ENCODE measurements at regions of chr16 and their contacts with region 1.

Region 1: DNA sequence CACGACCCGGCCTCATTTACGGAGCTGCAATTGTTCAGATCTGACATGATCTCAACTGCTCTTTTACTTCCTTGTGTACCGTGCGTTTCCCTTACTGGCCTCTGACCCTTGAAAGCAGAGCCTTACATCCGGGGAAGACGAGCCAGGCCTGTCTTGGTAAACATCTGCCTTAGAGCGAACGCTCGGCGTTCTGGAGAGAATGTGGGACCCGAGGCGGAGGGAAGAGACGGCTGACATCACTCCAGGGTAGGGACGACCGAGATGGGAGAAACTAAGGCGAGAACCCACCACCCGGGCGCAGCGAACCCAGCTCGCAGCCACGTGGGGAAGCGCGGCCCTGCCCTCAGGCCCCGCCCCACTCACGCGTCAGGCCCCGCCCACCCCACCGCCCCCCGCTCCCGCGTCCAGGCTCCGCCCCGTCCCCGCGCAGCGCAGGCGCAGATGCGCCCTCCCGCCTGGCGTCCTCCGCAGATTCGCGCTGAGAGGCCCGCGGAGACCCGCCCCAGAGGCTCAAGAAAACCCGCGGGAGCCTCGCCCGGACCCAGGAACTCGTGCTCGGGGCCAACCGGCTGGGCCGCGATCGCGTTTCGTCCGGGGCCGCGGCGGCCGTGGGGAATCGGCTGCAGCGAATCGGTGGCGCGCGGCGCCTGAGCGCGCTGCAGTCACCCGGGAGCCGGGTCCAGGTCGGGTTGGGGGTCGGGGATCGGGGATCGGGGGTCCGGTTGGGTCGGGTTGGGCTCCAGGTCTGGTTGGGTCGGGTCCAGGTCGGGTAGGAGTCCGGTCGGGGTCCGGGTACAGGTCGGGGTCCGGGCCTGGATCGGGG is at the start of gene TELO2:
- DNase-seq: peak; percentile 85 to 93 (median 88)
- H3K4me3 ChIP-seq: peak within 1 kb of the TSS; percentile 48 to 72
- H3K4me3 Mint-ChIP-seq: peak within 1 kb of the TSS; percentile 93 to 98 (median 95)
- H3K27ac ChIP-seq: peak within 1 kb of the TSS; percentile 78
- H3K27ac Mint-ChIP-seq: peak within 1 kb of the TSS; percentile 93 to 100 (median 99)
- H3K4me1 ChIP-seq: peaks cover 20% of the 10 kb centered on the region
- H3K4me1 Mint-ChIP-seq: peaks cover 7 to 22% (median 15%) of the 10 kb centered on the region in 4 donors
- H3K27me3 ChIP-seq: no peaks in the 10 kb centered on the region
- H3K27me3 Mint-ChIP-seq: peaks cover 0 to 1% of the 10 kb centered on the region in 2 donors
- total RNA-seq, gene TELO2: 55.3 to 56.0 TPM

Region 2: DNA sequence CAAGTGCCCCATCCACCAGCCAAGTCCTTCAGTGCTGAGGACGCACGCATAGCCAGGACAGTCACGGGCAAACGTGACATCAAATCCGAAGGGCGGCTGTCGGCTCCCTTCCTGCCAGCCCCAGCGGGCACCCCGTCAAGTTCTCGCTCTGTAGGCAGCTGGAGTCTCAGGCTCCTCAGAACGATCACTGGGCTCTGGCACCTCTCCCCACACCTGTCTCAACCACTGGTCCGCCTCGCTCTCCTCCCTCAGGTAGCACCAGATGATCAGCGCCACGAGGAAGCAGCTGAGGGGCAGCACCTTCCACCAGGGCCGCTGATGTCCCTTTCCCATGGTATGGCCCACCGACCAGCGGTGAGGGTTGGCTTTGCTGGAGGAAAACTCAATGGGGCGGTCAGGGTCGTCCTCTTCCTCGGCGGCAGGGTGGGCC is 73.0 kb before region 1 on chr16:
- CTCF ChIA-PET with region 1: no interaction called
- POLR2A ChIA-PET with region 1: interaction called, 22 read pairs
- intact Hi-C with region 1: loop called (anchors 1 kb)
- DNase-seq: no peak
- H3K4me3 ChIP-seq: peak overlapping the region; percentile 64 to 78
- H3K4me3 Mint-ChIP-seq: peak overlapping the region; percentile 79 to 97 (median 92)
- H3K27ac ChIP-seq: peak overlapping the region; percentile 85
- H3K27ac Mint-ChIP-seq: peak overlapping the region; percentile 64 to 100 (median 91)
- H3K4me1 ChIP-seq: peaks cover 12% of the 10 kb centered on the region
- H3K4me1 Mint-ChIP-seq: peaks cover 5 to 29% (median 15%) of the 10 kb centered on the region in 4 donors
- H3K27me3 ChIP-seq: no peaks in the 10 kb centered on the region
- H3K27me3 Mint-ChIP-seq: peaks cover 0 to 3% of the 10 kb centered on the region in 2 donors

Region 3: DNA sequence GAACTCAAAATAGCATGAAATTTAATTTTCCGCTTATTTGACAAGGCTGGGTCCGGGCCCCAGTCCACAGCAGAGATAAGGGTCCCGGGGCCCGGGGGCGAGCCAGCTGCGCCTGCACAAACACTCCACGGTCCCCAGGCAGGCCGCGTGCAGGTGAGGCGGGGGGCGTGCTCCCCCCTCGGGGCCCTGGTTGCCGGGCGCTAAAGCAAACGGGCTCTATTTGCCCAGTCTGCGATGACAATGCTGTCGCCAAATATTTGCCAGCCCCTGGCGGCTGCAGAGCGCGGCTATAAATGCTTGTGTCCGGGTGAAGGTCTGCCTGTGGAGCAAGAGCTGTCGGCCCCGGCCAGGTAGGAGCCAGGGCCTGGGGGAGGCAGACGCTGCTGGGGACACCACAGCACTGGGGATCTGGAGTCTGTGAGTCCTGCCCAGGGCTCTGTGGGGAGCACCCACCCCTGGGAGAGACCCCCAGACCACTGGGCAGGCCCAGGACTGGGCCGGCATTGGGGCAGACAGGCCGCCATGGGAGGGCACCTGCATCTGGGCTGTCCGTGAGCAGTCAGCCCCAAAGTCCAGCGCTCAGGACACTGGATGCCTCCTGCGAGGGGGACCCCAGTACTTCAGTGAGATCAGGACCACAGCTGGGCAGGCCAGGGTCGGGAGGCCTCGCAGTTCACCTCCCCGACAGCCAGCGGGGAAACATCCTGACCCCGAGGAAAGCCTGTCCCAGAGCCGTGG is 62.2 kb before region 1 on chr16 and contains the start of gene PERCC1:
- CTCF ChIA-PET with region 1: no interaction called
- POLR2A ChIA-PET with region 1: no interaction called
- intact Hi-C with region 1: no loop called
- DNase-seq: no peak
- H3K4me3 ChIP-seq: no peak within 1 kb of the TSS
- H3K4me3 Mint-ChIP-seq: peak within 1 kb of the TSS in 1 of 8 donors; percentile 20
- H3K27ac ChIP-seq: no peak within 1 kb of the TSS
- H3K27ac Mint-ChIP-seq: peak within 1 kb of the TSS in 1 of 7 donors; percentile 68
- H3K4me1 ChIP-seq: no peaks in the 10 kb centered on the region
- H3K4me1 Mint-ChIP-seq: no peaks in the 10 kb centered on the region
- H3K27me3 ChIP-seq: no peaks in the 10 kb centered on the region
- H3K27me3 Mint-ChIP-seq: no peaks in the 10 kb centered on the region
- total RNA-seq, gene PERCC1: 0.49 to 0.50 TPM

Region 4: DNA sequence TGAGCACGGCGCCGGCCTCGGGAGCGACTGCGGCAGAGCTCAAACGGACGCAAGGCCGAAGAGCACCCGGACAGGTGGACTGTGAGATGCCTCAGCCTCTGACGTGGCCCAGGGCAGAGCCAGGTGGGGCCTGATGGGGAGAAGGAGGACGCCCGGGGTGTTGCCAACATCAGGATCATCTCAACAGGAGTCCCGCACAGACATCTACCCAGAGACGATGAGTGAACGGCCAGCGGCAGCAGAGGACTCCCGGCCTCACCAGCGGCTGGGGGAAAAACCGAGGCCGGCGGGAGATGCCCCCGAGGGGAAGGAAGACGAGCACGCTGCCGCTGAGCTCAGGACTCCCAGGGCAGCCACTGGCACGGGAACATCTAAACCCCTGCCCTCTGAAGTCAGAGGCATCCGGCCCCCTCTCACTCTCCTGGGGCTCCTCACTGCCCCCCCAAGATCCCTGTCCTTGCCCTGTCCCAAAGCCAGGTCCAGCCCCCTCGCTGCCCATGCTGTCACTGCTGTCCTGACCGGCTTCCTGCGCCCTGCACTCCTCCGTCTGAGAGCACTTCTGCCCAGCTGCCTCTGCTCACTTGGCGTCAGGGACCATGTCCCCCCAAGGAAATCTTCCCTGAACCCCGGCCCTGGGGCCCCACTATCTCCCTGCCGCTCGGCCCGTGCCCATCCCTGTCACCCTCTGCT is 28.5 kb before region 1 on chr16:
- CTCF ChIA-PET with region 1: no interaction called
- POLR2A ChIA-PET with region 1: no interaction called
- intact Hi-C with region 1: no loop called
- DNase-seq: no peak
- H3K4me3 ChIP-seq: no peak overlapping the region
- H3K4me3 Mint-ChIP-seq: no peak overlapping the region
- H3K27ac ChIP-seq: no peak overlapping the region
- H3K27ac Mint-ChIP-seq: no peak overlapping the region
- H3K4me1 ChIP-seq: no peaks in the 10 kb centered on the region
- H3K4me1 Mint-ChIP-seq: peaks cover under 1 to 14% (median 3%) of the 10 kb centered on the region in 4 donors
- H3K27me3 ChIP-seq: no peaks in the 10 kb centered on the region
- H3K27me3 Mint-ChIP-seq: no peaks in the 10 kb centered on the region

Region 5: DNA sequence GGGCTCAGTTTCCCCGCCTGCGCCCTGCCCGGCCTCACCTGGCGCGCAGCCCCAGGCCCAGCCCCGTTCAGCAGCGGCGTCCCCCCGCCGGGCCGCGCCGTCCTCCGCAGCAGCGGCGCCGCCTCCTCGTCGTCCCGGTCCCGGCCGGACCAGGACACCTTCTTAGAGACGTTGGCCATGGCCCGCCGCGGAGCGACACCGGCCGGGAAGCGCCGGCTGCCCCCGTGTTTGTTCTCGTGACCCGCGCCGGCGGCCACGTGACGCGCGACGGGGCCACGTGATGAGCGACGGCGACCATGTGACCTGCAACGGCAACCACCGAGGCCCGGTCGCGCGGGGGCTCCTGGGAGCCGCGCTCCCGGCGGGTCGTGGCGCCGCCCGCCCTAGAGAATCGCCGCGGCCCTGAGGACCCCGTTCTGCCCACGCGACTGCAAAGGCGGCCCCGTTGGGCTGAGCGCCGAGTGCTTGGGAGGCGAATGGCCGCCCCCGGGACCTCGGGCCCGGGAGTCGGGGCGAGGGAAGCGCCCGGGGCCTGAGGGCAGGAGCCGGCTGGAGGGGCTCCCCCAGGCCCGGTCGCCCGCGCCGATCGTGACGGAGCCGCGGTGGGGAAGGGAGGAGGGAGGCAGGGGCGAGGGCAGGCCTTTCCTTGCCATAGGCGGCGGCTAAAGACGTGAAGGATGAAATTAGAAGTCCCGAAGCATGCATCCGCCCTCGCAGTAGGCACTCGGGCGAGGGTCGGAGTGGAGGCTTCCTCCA is 18.2 kb before region 1 on chr16 and contains the start of gene CLCN7:
- CTCF ChIA-PET with region 1: no interaction called
- POLR2A ChIA-PET with region 1: interaction called, 7 read pairs
- intact Hi-C with region 1: loop called (anchors 1 kb)
- DNase-seq: peak; percentile 83 to 87 (median 85)
- H3K4me3 ChIP-seq: peak within 1 kb of the TSS; percentile 49 to 74
- H3K4me3 Mint-ChIP-seq: peak within 1 kb of the TSS; percentile 80 to 91 (median 84)
- H3K27ac ChIP-seq: peak within 1 kb of the TSS; percentile 91
- H3K27ac Mint-ChIP-seq: peak within 1 kb of the TSS; percentile 85 to 93 (median 91)
- H3K4me1 ChIP-seq: peaks cover 25% of the 10 kb centered on the region
- H3K4me1 Mint-ChIP-seq: peaks cover 8 to 46% (median 30%) of the 10 kb centered on the region in 4 donors
- H3K27me3 ChIP-seq: no peaks in the 10 kb centered on the region
- H3K27me3 Mint-ChIP-seq: peaks cover 0 to 3% of the 10 kb centered on the region in 2 donors
- total RNA-seq, gene CLCN7: 105 to 111 TPM

Region 6: GRCh38 chr16:1533443-1533951 is 40.4 kb after region 1 on chr16 and contains the start of gene TMEM204:
- CTCF ChIA-PET with region 1: interaction called, 5 read pairs
- POLR2A ChIA-PET with region 1: interaction called, 30 read pairs
- intact Hi-C with region 1: loop called (anchors 2 kb)
- DNase-seq: peak; percentile 42 to 62 (median 58)
- H3K4me3 ChIP-seq: peak within 1 kb of the TSS; percentile 82 to 96
- H3K4me3 Mint-ChIP-seq: peak within 1 kb of the TSS; percentile 94 to 100 (median 98)
- H3K27ac ChIP-seq: peak within 1 kb of the TSS; percentile 73
- H3K27ac Mint-ChIP-seq: peak within 1 kb of the TSS; percentile 65 to 96 (median 93)
- H3K4me1 ChIP-seq: peaks cover 42% of the 10 kb centered on the region
- H3K4me1 Mint-ChIP-seq: peaks cover 24 to 53% (median 38%) of the 10 kb centered on the region in 4 donors
- H3K27me3 ChIP-seq: no peaks in the 10 kb centered on the region
- H3K27me3 Mint-ChIP-seq: no peaks in the 10 kb centered on the region
- total RNA-seq, gene TMEM204: 124 to 125 TPM

Region 7: DNA sequence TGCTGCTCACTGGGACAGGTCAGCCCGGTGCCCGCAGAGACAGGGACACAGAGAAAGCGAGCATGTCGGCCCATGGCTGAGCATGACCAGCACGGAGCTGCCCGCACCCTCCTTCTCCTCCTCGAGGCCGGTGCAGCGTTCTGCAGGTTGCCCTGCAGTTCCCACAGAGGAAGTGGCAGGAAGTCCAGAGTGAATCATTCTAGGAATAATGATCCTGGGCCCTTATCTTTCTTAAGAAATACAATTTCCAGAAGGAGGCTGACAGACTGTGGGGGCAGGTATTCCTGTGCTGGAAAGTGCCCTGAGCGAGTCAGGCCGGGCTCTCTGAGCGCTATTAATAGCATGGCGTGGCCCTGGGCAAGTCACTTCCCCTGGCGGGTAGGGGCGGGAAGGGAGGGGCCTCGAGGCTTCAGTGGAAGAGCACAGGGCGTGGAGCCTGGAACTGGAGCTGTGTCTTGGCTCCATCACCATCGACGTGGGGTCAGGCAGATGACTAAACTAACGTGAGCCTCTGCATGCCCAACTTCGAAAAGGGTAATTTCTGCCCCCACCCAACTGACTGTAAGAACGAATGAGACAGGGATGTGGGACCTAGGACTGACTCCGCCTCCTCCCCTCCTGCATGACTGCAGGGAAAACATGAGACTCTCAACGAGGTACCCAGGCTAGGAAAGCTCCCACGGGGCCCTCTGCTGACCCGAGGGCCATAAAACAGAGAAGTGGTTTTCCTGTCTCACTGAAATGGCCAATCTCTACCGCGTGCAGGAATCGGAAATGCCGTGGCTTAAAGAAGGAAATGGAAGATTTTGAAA is 50.2 kb after region 1 on chr16:
- CTCF ChIA-PET with region 1: interaction called, 5 read pairs
- POLR2A ChIA-PET with region 1: interaction called, 13 read pairs
- intact Hi-C with region 1: no loop called
- DNase-seq: peak in 4 of 5 donors; percentile 15 to 76 (median 38)
- H3K4me3 ChIP-seq: peak overlapping the region in 1 of 2 donors; percentile 6
- H3K4me3 Mint-ChIP-seq: peak overlapping the region in 7 of 8 donors; percentile 72 to 84 (median 79)
- H3K27ac ChIP-seq: peak overlapping the region; percentile 42
- H3K27ac Mint-ChIP-seq: peak overlapping the region; percentile 27 to 94 (median 80)
- H3K4me1 ChIP-seq: peaks cover 85% of the 10 kb centered on the region
- H3K4me1 Mint-ChIP-seq: peaks cover 29 to 90% (median 66%) of the 10 kb centered on the region in 4 donors
- H3K27me3 ChIP-seq: no peaks in the 10 kb centered on the region
- H3K27me3 Mint-ChIP-seq: no peaks in the 10 kb centered on the region

Region 8: DNA sequence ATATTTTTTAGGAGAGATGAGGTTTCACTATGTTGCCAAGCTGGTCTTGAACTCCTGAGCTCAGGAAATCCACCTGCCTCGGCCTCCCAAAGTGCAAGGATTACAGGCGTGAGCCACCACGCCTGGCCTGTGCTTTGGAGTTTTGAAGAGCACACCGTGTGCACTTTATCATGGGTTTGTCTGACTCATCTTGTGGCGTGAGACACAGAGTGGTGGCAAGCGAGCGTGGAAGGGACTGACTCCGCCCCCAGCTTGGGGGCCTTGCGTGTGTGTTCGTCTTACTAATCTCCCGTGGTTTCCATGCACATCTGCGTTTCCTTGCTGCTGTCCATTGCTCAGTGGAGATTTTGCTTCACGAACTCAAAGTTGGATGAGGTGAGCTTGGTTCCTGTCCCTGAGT is 141.9 kb after region 1 on chr16:
- CTCF ChIA-PET with region 1: no interaction called
- POLR2A ChIA-PET with region 1: no interaction called
- intact Hi-C with region 1: no loop called
- DNase-seq: no peak
- H3K4me3 ChIP-seq: no peak overlapping the region
- H3K4me3 Mint-ChIP-seq: no peak overlapping the region
- H3K27ac ChIP-seq: no peak overlapping the region
- H3K27ac Mint-ChIP-seq: no peak overlapping the region
- H3K4me1 ChIP-seq: no peaks in the 10 kb centered on the region
- H3K4me1 Mint-ChIP-seq: peaks cover 0 to 5% (median 3%) of the 10 kb centered on the region in 4 donors
- H3K27me3 ChIP-seq: no peaks in the 10 kb centered on the region
- H3K27me3 Mint-ChIP-seq: no peaks in the 10 kb centered on the region

Region 9: GRCh38 chr16:1942810-1943726 is 449.9 kb after region 1 on chr16 and contains the start of gene MSRB1:
- CTCF ChIA-PET with region 1: no interaction called
- POLR2A ChIA-PET with region 1: no interaction called
- intact Hi-C with region 1: loop called (anchors 5 kb)
- DNase-seq: peak; percentile 97 to 99 (median 98)
- H3K4me3 ChIP-seq: peak within 1 kb of the TSS; percentile 52 to 90
- H3K4me3 Mint-ChIP-seq: peak within 1 kb of the TSS; percentile 82 to 91 (median 86)
- H3K27ac ChIP-seq: peak within 1 kb of the TSS; percentile 58
- H3K27ac Mint-ChIP-seq: peak within 1 kb of the TSS; percentile 64 to 91 (median 70)
- H3K4me1 ChIP-seq: peaks cover 21% of the 10 kb centered on the region
- H3K4me1 Mint-ChIP-seq: peaks cover 0 to 26% (median 7%) of the 10 kb centered on the region in 4 donors
- H3K27me3 ChIP-seq: no peaks in the 10 kb centered on the region
- H3K27me3 Mint-ChIP-seq: no peaks in the 10 kb centered on the region
- total RNA-seq, gene MSRB1: 9.3 to 10.6 TPM

Measured in CD4-positive, alpha-beta memory T cell (primary cell).